ENCODE measurements at regions of chr11 and their contacts with region 1.

Region 1: GRCh38 chr11:35165423-35166368 is 26.7 kb downstream of the CD44 start:
- DNase-seq: peak; percentile 96
- ATAC-seq: peak; percentile 67
- H3K4me3 Mint-ChIP-seq: peak overlapping the region; percentile 63
- H3K27ac Mint-ChIP-seq: peak overlapping the region; percentile 98
- H3K4me1 Mint-ChIP-seq: peaks cover 97% of the 10 kb centered on the region
- H3K27me3 Mint-ChIP-seq: no peaks in the 10 kb centered on the region
- CTCF ChIP-seq: no peak

Region 2: DNA sequence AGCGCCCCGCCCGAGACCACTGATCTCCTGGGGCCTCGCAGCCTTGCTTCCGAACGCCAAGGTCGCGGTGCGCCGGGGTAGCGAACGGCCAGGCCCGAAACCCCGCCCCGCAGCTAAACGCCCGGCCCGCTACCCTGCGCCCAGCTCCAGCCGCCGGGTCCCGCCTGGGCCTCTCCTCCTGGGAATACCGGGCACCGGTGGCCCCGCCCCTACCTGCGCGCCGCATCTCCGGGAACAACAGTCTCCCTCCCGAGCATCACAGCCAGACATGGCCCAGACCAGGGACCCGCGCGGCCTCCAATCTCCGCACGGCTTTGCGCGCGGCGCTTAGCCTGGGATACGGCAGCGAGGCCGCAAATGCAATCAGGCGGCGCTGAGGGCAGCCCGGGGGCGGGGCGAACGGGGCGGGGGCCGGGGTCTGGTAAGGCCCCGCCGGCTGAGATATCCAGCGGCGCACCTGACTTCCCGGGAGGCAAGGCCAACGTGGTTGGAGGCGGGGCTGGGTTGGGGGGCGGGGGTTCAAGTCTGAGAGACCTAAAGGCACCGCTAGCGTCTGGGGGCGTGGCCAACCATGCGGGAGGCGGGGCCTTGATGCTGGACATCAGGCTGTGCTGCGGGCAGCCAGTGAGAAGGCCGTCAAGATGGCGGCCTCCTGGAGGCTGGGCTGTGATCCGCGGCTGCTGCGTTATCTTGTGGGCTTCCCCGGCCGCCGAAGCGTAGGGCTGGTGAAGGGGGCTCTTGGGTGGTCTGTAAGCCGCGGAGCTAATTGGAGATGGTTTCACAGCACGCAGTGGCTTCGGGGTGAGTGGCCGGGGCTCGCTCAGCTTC is 249.5 kb before region 1 on chr11 and contains the starts of genes APIP and PDHX:
- CTCF ChIA-PET with region 1: no interaction called
- POLR2A ChIA-PET with region 1: interaction called, 3 read pairs
- intact Hi-C with region 1: loop called (anchors 5 kb)
- DNase-seq: peak; percentile 99
- ATAC-seq: peak; percentile 96
- H3K4me3 Mint-ChIP-seq: peak within 1 kb of the TSS; percentile 79
- H3K27ac Mint-ChIP-seq: peak within 1 kb of the TSS; percentile 89
- H3K4me1 Mint-ChIP-seq: peaks cover 37% of the 10 kb centered on the region
- H3K27me3 Mint-ChIP-seq: no peaks in the 10 kb centered on the region
- CTCF ChIP-seq: no peak
- total RNA-seq, gene APIP: 34.4 to 39.0 TPM
- total RNA-seq, gene PDHX: 37.1 to 37.4 TPM

Region 3: DNA sequence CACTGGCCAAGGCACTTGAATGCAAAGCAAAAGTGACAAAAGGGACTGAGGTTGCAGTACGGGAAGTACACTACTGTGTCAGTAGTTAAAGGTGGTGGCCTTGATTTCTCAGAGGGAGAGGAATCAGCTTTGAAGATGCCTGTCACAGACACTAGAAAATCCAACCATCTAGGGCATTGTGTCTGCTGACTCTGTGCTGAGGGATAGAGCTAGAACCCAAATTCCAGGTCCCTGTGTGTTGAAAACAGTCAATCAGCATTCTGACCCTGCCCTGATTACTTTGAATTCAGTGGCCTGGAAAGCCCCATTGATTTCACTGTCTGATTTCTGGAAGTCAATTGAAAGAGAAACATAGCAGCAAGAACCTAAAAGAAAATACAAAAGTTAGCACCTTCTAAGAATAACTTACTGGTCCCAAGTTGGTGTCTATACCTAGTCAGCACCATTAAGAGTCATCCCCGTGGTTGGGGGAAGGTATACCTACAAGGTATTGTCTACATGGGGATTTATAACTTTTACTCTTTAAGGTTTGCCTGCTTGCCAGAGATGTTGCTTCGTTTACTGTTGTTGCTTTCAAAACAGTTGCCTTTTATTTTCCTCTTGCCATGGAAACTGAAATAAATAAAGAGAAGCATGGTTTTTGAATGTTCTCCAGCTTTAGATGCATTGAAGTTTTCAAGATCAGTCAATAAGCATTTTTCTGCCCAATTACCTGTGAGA is 152.0 kb before region 1 on chr11:
- CTCF ChIA-PET with region 1: interaction called, 6 read pairs
- POLR2A ChIA-PET with region 1: interaction called, 3 read pairs
- intact Hi-C with region 1: loop called (anchors 5 kb)
- DNase-seq: peak; percentile 48
- ATAC-seq: peak; percentile 70
- H3K4me3 Mint-ChIP-seq: peak overlapping the region; percentile 13
- H3K27ac Mint-ChIP-seq: peak overlapping the region; percentile 76
- H3K4me1 Mint-ChIP-seq: peaks cover 47% of the 10 kb centered on the region
- H3K27me3 Mint-ChIP-seq: peaks cover 2% of the 10 kb centered on the region
- CTCF ChIP-seq: no peak

Region 4: DNA sequence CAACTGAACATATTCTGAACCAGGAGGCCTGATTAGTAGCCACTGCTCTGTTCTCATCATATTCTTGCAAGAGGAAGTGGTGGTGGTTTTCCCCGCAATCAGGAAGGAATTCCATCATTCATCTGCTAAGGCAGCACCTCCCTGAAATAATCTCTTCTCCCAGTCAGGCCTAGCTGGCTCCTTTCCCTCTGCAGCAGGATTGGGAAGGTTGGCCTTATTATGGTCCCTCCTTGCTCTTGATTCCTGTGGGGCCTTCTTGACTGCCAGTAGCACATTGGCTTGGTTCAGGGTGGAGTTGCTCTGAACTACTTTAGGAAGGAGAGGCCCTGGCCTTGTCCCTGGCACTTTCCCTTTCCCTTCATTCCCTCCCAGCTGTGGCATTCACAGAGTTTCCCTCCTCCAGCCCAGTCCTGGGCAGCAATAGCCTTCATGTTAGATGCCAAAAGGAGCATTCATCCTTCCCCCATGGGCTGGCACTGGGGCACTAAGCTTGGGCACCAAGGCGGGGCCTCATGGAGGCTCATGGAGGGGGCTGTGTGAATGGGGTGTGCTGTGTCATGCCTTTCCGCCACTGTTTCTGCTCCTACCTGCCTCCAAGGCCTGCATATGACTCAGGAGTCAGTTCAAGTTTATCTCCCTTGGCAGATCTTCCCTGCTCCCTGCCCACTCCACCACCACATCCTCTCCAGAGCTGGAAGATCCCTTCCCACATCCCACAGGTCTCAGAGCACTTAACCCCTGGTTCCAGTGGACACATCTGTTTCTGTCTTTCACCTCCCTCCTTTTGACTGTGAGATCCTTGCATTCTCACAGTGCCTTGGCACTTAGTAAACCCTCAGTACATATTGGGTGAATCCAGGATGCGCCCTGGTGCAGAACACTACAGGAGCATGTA is 54.3 kb before region 1 on chr11:
- CTCF ChIA-PET with region 1: no interaction called
- POLR2A ChIA-PET with region 1: no interaction called
- intact Hi-C with region 1: no loop called
- DNase-seq: no peak
- ATAC-seq: no peak
- H3K4me3 Mint-ChIP-seq: no peak overlapping the region
- H3K27ac Mint-ChIP-seq: no peak overlapping the region
- H3K4me1 Mint-ChIP-seq: peaks cover 38% of the 10 kb centered on the region
- H3K27me3 Mint-ChIP-seq: no peaks in the 10 kb centered on the region
- CTCF ChIP-seq: no peak

Region 5: DNA sequence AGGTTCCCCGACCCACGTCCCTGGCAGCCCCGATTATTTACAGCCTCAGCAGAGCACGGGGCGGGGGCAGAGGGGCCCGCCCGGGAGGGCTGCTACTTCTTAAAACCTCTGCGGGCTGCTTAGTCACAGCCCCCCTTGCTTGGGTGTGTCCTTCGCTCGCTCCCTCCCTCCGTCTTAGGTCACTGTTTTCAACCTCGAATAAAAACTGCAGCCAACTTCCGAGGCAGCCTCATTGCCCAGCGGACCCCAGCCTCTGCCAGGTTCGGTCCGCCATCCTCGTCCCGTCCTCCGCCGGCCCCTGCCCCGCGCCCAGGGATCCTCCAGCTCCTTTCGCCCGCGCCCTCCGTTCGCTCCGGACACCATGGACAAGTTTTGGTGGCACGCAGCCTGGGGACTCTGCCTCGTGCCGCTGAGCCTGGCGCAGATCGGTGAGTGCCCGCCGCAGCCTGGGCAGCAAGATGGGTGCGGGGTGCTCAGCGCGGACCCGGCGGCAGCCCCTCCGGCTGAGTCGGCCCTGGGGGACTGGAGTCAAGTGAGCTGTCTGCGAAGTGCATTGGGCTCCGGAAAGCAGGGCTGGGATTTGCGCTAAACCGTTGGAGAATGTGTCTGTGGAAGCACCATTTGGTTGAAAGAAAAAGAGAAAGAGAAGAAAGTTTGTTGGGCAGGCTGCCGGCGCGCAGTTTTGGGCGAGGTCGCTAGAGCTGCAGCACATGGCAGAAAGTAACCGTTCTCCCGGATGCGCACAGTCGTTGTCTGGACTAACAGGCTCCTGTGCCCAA is 26.6 kb before region 1 on chr11 and contains the start of gene CD44:
- CTCF ChIA-PET with region 1: interaction called, 8 read pairs
- POLR2A ChIA-PET with region 1: interaction called, 203 read pairs
- intact Hi-C with region 1: no loop called
- DNase-seq: peak; percentile 89
- ATAC-seq: peak; percentile 81
- H3K4me3 Mint-ChIP-seq: peak within 1 kb of the TSS; percentile 93
- H3K27ac Mint-ChIP-seq: peak within 1 kb of the TSS; percentile 95
- H3K4me1 Mint-ChIP-seq: peaks cover 47% of the 10 kb centered on the region
- H3K27me3 Mint-ChIP-seq: no peaks in the 10 kb centered on the region
- CTCF ChIP-seq: no peak
- total RNA-seq, gene CD44: 363 to 373 TPM

Region 6: DNA sequence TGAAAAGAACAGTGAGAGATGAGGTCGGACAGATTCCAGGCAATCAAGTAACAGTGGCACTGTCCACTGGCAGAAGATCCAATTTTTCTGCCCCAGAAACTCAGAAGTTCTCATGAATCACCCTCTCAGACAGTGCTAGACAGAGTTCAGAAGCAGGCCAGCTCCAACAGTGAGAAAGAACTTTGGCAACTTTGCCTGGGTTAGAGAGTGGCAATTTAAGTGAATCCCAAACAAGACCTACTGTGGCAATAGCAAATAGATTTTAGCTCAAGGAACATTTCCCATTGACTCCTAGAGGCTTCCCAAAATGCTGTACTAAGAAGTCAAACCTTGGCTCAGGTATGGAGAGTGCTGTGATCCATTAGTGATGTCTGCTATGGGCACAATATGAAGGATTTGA is 14.5 kb before region 1 on chr11:
- CTCF ChIA-PET with region 1: interaction called, 94 read pairs
- POLR2A ChIA-PET with region 1: interaction called, 203 read pairs
- intact Hi-C with region 1: loop called (anchors 2 kb)
- DNase-seq: no peak
- ATAC-seq: no peak
- H3K4me3 Mint-ChIP-seq: no peak overlapping the region
- H3K27ac Mint-ChIP-seq: peak overlapping the region; percentile 97
- H3K4me1 Mint-ChIP-seq: peaks cover 96% of the 10 kb centered on the region
- H3K27me3 Mint-ChIP-seq: no peaks in the 10 kb centered on the region
- CTCF ChIP-seq: no peak

Region 7: GRCh38 chr11:35182317-35182939 is 16.7 kb after region 1 on chr11:
- CTCF ChIA-PET with region 1: interaction called, 89 read pairs
- POLR2A ChIA-PET with region 1: interaction called, 50 read pairs
- intact Hi-C with region 1: loop called (anchors 1 kb)
- DNase-seq: no peak
- ATAC-seq: no peak
- H3K4me3 Mint-ChIP-seq: no peak overlapping the region
- H3K27ac Mint-ChIP-seq: peak overlapping the region; percentile 87
- H3K4me1 Mint-ChIP-seq: peaks cover 85% of the 10 kb centered on the region
- H3K27me3 Mint-ChIP-seq: no peaks in the 10 kb centered on the region
- CTCF ChIP-seq: no peak

Region 8: GRCh38 chr11:35204614-35205013 is 38.9 kb after region 1 on chr11:
- CTCF ChIA-PET with region 1: no interaction called
- POLR2A ChIA-PET with region 1: no interaction called
- intact Hi-C with region 1: no loop called
- DNase-seq: no peak
- ATAC-seq: no peak
- H3K4me3 Mint-ChIP-seq: no peak overlapping the region
- H3K27ac Mint-ChIP-seq: peak overlapping the region; percentile 31
- H3K4me1 Mint-ChIP-seq: peaks cover 44% of the 10 kb centered on the region
- H3K27me3 Mint-ChIP-seq: no peaks in the 10 kb centered on the region
- CTCF ChIP-seq: no peak

Region 9: GRCh38 chr11:35280727-35281126 is 115.0 kb after region 1 on chr11:
- CTCF ChIA-PET with region 1: no interaction called
- POLR2A ChIA-PET with region 1: no interaction called
- intact Hi-C with region 1: no loop called
- DNase-seq: no peak
- ATAC-seq: no peak
- H3K4me3 Mint-ChIP-seq: no peak overlapping the region
- H3K27ac Mint-ChIP-seq: no peak overlapping the region
- H3K4me1 Mint-ChIP-seq: peaks cover 22% of the 10 kb centered on the region
- H3K27me3 Mint-ChIP-seq: no peaks in the 10 kb centered on the region
- CTCF ChIP-seq: no peak